ENCODE measurements at regions of chr2 and their contacts with region 1.

Region 1: GRCh38 chr2:17719562-17720371 is 33.8 kb downstream of the SMC6 start:
- DNase-seq: peak; percentile 21
- H3K4me3 Mint-ChIP-seq: no peak overlapping the region
- H3K27ac Mint-ChIP-seq: no peak overlapping the region
- H3K4me1 Mint-ChIP-seq: no peaks in the 10 kb centered on the region
- H3K27me3 Mint-ChIP-seq: no peaks in the 10 kb centered on the region
- CTCF ChIP-seq: peak; percentile 63

Region 2: GRCh38 chr2:17506736-17507616 is 212.8 kb before region 1 on chr2:
- CTCF ChIA-PET with region 1: no interaction called
- POLR2A ChIA-PET with region 1: no interaction called
- intact Hi-C with region 1: no loop called
- DNase-seq: peak; percentile 42
- H3K4me3 Mint-ChIP-seq: no peak overlapping the region
- H3K27ac Mint-ChIP-seq: peak overlapping the region; percentile 88
- H3K4me1 Mint-ChIP-seq: peaks cover 14% of the 10 kb centered on the region
- H3K27me3 Mint-ChIP-seq: no peaks in the 10 kb centered on the region
- CTCF ChIP-seq: no peak

Region 3: GRCh38 chr2:17518212-17519154 is 201.3 kb before region 1 on chr2 and contains the start of gene RAD51AP2:
- CTCF ChIA-PET with region 1: no interaction called
- POLR2A ChIA-PET with region 1: no interaction called
- intact Hi-C with region 1: no loop called
- DNase-seq: peak; percentile 84
- H3K4me3 Mint-ChIP-seq: peak within 1 kb of the TSS; percentile 76
- H3K27ac Mint-ChIP-seq: peak within 1 kb of the TSS; percentile 21
- H3K4me1 Mint-ChIP-seq: peaks cover 5% of the 10 kb centered on the region
- H3K27me3 Mint-ChIP-seq: no peaks in the 10 kb centered on the region
- CTCF ChIP-seq: no peak
- total RNA-seq, gene RAD51AP2: 0.10 and 0.14 TPM in 2 replicates

Region 4: DNA sequence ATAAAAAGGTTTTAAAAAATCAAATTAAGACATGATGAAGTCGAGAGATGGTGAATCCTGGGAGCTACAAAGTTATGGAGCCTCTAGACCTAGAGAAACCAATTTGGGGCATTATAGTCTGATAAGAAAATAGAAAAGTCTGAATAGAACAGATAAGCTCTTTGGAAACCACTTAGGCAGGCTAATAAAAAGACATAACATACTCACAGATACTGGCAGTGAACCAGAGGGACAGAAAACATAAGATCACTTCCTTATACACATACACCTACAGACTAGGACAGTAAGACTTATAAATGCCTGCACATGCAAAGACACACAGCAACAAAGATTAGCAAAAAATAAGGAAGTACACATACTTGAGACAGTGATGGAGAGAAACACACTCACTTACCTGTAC is 13.8 kb after region 1 on chr2:
- CTCF ChIA-PET with region 1: interaction called, 18 read pairs
- POLR2A ChIA-PET with region 1: interaction called, 3 read pairs
- intact Hi-C with region 1: no loop called
- DNase-seq: no peak
- H3K4me3 Mint-ChIP-seq: no peak overlapping the region
- H3K27ac Mint-ChIP-seq: no peak overlapping the region
- H3K4me1 Mint-ChIP-seq: no peaks in the 10 kb centered on the region
- H3K27me3 Mint-ChIP-seq: no peaks in the 10 kb centered on the region
- CTCF ChIP-seq: no peak

Region 5: GRCh38 chr2:17754773-17755425 is 35.1 kb after region 1 on chr2:
- CTCF ChIA-PET with region 1: no interaction called
- POLR2A ChIA-PET with region 1: no interaction called
- intact Hi-C with region 1: no loop called
- DNase-seq: peak; percentile 24
- H3K4me3 Mint-ChIP-seq: peak overlapping the region; percentile 82
- H3K27ac Mint-ChIP-seq: peak overlapping the region; percentile 97
- H3K4me1 Mint-ChIP-seq: peaks cover 41% of the 10 kb centered on the region
- H3K27me3 Mint-ChIP-seq: no peaks in the 10 kb centered on the region
- CTCF ChIP-seq: no peak

Region 6: GRCh38 chr2:17821535-17822444 is 102.0 kb after region 1 on chr2:
- CTCF ChIA-PET with region 1: interaction called, 14 read pairs
- POLR2A ChIA-PET with region 1: no interaction called
- intact Hi-C with region 1: no loop called
- DNase-seq: no peak
- H3K4me3 Mint-ChIP-seq: no peak overlapping the region
- H3K27ac Mint-ChIP-seq: no peak overlapping the region
- H3K4me1 Mint-ChIP-seq: no peaks in the 10 kb centered on the region
- H3K27me3 Mint-ChIP-seq: no peaks in the 10 kb centered on the region
- CTCF ChIP-seq: no peak

Region 7: GRCh38 chr2:17851731-17852585 is 132.2 kb after region 1 on chr2:
- CTCF ChIA-PET with region 1: interaction called, 17 read pairs
- POLR2A ChIA-PET with region 1: no interaction called
- intact Hi-C with region 1: no loop called
- DNase-seq: peak; percentile 79
- H3K4me3 Mint-ChIP-seq: no peak overlapping the region
- H3K27ac Mint-ChIP-seq: peak overlapping the region; percentile 66
- H3K4me1 Mint-ChIP-seq: peaks cover 10% of the 10 kb centered on the region
- H3K27me3 Mint-ChIP-seq: peaks cover 32% of the 10 kb centered on the region
- CTCF ChIP-seq: peak; percentile 98

Region 8: DNA sequence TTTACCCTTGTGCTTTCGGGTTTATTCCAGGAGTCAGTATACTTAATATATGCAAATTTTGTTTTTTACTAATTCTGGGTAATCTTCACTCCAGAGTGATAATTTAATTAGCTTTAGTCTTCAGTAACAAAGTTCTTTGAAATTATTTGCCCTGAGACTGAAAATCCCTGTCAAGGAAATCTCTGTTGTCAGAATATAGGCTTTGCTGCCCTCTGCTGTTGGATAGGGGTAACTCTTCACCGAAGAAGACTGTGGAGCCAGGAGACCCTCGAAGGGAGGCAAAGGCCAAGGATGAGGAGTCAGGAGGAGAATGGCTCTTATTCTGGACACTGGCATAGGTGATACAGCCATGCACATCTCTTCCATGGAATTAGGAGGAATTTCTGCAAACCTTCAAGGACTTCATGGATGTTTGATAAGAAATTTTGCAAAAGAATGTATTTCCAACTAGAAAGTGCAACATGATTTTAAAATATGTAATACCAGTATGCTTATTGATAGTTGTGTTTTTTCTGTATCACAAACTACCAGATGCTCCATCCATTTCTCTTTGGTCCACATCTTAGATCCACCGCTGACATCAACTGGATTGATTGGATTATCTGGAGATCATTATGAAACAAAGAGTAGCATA is 658.4 kb after region 1 on chr2:
- CTCF ChIA-PET with region 1: interaction called, 20 read pairs
- POLR2A ChIA-PET with region 1: interaction called, 3 read pairs
- intact Hi-C with region 1: loop called (anchors 10 kb)
- DNase-seq: peak; percentile 66
- H3K4me3 Mint-ChIP-seq: no peak overlapping the region
- H3K27ac Mint-ChIP-seq: no peak overlapping the region
- H3K4me1 Mint-ChIP-seq: peaks cover 6% of the 10 kb centered on the region
- H3K27me3 Mint-ChIP-seq: peaks cover 13% of the 10 kb centered on the region
- CTCF ChIP-seq: peak; percentile 82